ENCODE measurements at regions of chr6 and their contacts with region 1.

Region 1: DNA sequence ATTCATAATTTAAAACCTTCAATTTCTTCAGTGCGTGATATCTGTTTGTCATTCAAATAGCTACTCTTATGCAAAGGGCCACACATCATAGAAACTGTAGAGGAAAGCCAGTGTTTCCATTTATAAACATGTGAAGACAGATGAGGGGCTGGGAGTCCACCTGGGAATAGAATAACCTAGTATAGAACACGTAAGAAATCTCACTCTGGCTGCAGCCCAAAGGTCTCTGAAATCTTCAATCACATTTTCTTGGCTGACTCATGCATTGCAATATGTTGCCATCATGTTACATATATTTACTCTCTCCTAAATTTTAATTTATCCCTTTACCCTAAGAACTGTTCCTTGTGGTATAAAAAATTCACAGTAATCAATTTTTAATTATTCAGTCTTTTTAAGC is 123.2 kb downstream of the ELOVL4 start:
- DNase-seq: no peak
- H3K4me3 ChIP-seq: no peak overlapping the region
- H3K27ac ChIP-seq: no peak overlapping the region
- H3K27me3 ChIP-seq: no peaks in the 10 kb centered on the region
- CTCF ChIP-seq: no peak

Region 2: DNA sequence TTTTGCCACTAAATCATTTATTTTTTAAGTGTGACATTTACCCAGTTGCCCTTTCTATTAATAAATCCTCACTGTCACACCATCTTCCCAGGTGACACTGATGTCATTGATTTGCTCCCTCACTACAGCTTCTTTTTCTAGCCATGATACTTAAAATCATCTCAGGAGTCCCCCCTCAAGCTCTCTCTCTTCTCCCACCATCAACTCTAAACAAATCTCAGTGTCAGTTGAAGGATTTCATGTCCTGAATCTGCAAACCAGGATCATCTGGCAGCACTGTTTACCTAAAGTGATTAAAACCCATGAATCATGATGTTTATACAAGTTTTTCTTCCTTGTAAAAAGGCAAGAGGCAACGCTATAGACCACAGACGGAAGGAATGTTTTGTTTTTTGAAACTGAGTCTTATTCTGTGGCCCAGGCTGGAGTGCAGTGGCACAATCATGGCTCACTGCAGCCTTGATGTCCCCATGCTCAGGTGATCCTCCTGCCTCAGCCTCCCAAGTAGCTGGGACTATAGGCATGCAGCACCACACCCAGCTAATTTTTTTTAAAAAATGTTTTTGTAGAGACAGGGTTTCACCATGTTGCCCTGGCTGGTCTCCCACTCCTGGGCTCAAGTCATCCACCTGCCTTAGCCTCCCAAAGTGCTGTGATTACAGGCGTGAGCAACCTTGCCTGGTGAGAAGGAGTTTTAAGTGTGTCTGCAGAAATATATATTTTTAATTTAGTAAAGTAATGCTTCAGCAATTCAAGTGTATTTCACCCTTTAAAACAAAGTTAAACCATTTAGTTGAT is 223.2 kb before region 1 on chr6:
- CTCF ChIA-PET with region 1: no interaction called
- POLR2A ChIA-PET with region 1: no interaction called
- DNase-seq: peak; percentile 44
- H3K4me3 ChIP-seq: no peak overlapping the region
- H3K27ac ChIP-seq: peak overlapping the region; percentile 47
- H3K27me3 ChIP-seq: no peaks in the 10 kb centered on the region
- CTCF ChIP-seq: no peak

Region 3: DNA sequence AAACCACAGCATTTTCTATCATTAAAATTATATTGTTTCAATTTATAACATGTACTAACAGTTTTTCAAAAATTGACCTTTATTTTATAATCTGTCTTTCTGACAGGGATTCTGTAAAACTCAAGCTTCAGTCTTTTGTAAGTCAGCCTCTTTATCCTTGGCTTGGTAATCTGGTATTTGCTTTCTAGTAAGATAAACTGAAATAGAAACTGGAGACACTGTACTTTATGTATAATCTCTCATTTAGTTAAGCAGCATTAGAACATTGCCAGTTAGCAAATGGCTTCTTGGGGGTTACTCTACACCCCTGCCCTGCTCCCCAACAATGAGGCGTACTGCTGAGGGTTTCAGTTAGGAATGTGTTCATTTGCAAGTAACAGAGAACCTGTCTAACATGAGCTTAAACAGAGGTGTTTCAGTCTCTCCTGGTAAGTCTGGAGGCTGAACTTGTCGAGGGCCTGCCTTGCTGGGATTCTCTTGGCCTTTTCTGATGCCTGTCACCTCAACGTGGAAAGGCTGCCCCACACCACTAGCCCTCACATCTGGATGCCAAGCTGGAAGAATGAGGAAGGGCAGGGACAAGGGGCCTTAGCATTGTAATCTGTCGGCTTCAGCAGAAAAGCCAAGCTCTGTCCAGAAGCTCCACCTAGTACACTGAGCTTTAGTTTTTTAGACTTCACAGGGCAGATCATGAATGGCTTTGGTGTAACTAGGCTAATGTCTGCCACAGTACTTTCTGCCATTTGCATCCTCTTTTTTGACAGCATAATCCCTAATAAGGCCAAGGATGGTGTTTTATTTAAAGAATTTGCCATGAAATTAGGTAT is 158.3 kb before region 1 on chr6:
- CTCF ChIA-PET with region 1: no interaction called
- POLR2A ChIA-PET with region 1: no interaction called
- DNase-seq: no peak
- H3K4me3 ChIP-seq: no peak overlapping the region
- H3K27ac ChIP-seq: no peak overlapping the region
- H3K27me3 ChIP-seq: no peaks in the 10 kb centered on the region
- CTCF ChIP-seq: no peak

Region 4: DNA sequence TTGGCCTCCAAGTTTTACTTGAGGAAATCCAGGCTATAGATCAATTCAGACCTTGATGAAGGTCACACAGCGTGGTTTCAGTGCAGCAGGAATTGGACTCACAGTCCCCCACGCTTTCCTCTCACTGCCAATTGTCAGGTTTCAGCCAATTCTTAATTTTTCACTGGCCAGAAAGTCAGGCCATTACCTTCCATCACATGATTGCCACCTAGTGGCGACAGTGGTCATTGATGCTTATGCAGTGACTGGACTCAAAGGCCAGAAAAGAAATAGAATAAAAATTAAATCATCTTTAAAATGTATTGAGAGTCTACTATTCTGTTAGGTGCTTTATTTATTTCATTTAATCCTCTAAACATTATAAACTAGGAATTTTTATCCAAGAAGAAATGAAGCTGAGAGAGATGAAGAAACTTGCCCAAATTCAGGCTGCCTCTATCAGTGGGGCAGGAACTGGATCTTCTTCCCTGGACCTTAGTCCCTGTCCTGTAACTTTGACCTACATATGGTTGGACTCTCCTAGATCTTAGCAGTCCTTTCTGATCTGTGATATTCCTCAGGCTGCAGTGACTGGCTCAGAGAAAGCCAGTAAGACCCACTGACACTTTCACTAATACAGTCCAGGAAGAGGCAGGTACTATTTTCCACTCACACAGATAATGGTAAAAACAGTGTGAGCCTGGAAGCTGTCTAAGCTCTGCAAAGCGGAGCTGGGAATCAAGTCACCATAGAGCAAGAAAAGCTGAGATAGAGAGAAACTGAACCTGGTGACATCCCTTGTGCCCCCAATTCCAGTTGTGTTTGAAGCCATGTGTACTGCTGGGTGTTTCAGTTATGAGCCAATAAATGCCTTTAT is 10.1 kb before region 1 on chr6:
- CTCF ChIA-PET with region 1: interaction called, 11 read pairs
- POLR2A ChIA-PET with region 1: no interaction called
- DNase-seq: peak; percentile 26
- H3K4me3 ChIP-seq: no peak overlapping the region
- H3K27ac ChIP-seq: no peak overlapping the region
- H3K27me3 ChIP-seq: no peaks in the 10 kb centered on the region
- CTCF ChIP-seq: peak; percentile 88

Region 5: DNA sequence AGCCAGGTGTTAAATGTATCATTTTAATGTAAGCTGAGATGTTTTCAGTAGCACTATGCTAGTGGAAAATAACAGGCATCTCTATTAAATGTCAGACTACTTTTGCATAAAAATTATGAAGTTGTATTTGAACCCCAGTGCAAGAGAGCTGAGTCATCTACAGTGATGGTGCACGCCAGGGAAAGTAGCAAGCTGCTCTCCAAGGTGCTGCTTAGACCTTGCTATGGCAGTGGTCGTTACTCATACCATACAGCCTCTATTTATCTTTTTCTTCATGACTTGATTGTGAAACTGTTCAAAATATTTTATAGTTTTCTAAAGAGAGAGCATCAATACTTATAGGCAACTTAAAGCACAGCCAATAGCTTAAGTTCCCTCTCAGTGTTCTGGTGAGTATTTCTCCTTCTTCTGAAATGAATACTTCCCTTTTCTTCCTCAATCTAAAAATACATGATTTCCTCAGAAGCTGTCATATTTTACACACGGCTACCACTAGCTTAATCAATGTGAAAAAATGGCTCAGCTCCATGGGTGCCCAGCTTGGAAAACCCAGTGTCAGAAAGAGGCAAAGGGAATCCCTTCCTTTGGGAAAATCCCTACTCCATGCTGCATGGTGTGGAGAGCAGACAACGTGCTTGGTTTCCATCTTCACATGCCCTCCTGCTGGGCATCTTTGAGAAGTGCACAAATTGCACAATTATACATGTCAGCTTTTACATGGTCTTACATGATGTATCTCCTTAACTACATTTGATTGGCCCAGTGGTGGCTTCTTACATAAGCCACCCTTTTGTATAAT is 17.6 kb after region 1 on chr6:
- CTCF ChIA-PET with region 1: no interaction called
- POLR2A ChIA-PET with region 1: no interaction called
- DNase-seq: no peak
- H3K4me3 ChIP-seq: no peak overlapping the region
- H3K27ac ChIP-seq: no peak overlapping the region
- H3K27me3 ChIP-seq: no peaks in the 10 kb centered on the region
- CTCF ChIP-seq: no peak

Region 6: DNA sequence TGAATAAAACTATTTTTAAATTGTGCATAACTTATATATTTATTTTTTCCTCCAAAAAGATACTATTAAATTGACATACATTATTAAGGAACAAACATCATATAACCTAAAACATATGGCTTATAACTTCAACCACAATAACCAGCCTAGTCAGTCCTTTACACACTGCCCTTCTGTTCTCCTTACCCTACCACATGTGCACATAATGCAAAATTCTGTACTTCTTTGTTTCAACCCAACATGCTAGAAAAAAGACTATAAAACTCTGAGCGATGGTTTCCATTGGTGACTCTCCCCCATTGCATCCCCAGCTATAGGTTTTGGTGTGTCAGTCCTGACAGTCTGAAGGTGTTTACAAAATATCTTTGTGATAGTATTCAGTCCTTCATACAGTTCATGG is 165.4 kb after region 1 on chr6:
- CTCF ChIA-PET with region 1: no interaction called
- POLR2A ChIA-PET with region 1: no interaction called
- DNase-seq: no peak
- H3K4me3 ChIP-seq: no peak overlapping the region
- H3K27ac ChIP-seq: no peak overlapping the region
- H3K27me3 ChIP-seq: no peaks in the 10 kb centered on the region
- CTCF ChIP-seq: no peak